ENCODE measurements at regions of chr11 and their contacts with region 1.

Region 1: DNA sequence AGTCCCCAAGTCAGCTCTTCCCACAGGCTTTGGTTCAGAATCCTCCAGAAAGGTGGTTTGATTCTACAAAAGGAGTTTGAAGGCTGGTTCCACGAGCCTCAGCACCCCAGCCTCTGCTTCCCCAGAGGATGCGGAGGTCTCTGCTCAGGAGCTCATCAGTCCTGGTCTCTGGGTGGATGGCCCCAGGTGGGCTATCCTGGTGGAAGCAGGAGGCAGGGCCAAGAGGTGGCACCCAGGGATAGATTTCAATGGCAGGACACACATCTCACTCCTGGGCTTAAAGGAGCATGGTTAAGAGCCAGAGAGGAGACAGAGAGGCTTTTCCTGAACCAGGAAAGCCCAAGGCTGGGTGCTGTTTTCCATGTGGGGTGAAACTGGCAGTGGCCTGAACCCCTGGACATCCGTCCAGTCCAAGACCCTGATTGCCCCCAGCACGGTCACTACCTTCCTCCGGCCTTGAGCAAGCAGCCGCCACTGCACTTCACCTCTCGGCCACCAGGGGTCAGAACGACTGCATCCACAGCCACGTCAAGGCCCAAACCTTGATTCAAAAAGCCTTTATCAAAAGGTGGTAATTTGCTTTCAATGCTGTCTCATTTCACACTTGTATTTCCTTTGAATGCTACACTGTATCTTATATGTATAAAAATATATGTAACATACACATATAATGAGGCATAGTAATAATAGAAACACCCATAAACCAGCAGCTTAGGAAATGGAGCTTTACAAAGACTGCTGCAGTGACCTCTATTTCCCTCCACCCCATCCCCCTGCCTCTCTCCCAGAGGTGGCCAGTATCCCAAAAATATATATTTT is 19.3 kb upstream of the FXYD2 start:
- DNase-seq: peak; percentile 79 to 90 (median 82)
- H3K4me3 ChIP-seq: no peak overlapping the region
- H3K27ac ChIP-seq: no peak overlapping the region
- H3K4me1 ChIP-seq: peaks cover 0 to 5% (median 0%) of the 10 kb centered on the region in 3 donors
- H3K27me3 ChIP-seq: no peaks in the 10 kb centered on the region
- CTCF ChIP-seq: peak; percentile 100

Region 2: GRCh38 chr11:117900121-117900648 is 56.3 kb after region 1 on chr11:
- intact Hi-C with region 1: no loop called
- DNase-seq: peak in 1 of 5 donors; percentile 20
- H3K4me3 ChIP-seq: no peak overlapping the region
- H3K27ac ChIP-seq: no peak overlapping the region
- H3K4me1 ChIP-seq: no peaks in the 10 kb centered on the region
- H3K27me3 ChIP-seq: no peaks in the 10 kb centered on the region
- CTCF ChIP-seq: no peak

Region 3: GRCh38 chr11:118051611-118052461 is 208.0 kb after region 1 on chr11:
- intact Hi-C with region 1: loop called (anchors 10 kb)
- DNase-seq: no peak
- H3K4me3 ChIP-seq: no peak overlapping the region
- H3K27ac ChIP-seq: no peak overlapping the region
- H3K4me1 ChIP-seq: peaks cover 0 to 2% (median 0%) of the 10 kb centered on the region in 3 donors
- H3K27me3 ChIP-seq: no peaks in the 10 kb centered on the region
- CTCF ChIP-seq: no peak